Heart left ventricle (tissue), 16 donors: ENCODE measurements at regions of chr17 and their contacts with region 1.

Region 1: DNA sequence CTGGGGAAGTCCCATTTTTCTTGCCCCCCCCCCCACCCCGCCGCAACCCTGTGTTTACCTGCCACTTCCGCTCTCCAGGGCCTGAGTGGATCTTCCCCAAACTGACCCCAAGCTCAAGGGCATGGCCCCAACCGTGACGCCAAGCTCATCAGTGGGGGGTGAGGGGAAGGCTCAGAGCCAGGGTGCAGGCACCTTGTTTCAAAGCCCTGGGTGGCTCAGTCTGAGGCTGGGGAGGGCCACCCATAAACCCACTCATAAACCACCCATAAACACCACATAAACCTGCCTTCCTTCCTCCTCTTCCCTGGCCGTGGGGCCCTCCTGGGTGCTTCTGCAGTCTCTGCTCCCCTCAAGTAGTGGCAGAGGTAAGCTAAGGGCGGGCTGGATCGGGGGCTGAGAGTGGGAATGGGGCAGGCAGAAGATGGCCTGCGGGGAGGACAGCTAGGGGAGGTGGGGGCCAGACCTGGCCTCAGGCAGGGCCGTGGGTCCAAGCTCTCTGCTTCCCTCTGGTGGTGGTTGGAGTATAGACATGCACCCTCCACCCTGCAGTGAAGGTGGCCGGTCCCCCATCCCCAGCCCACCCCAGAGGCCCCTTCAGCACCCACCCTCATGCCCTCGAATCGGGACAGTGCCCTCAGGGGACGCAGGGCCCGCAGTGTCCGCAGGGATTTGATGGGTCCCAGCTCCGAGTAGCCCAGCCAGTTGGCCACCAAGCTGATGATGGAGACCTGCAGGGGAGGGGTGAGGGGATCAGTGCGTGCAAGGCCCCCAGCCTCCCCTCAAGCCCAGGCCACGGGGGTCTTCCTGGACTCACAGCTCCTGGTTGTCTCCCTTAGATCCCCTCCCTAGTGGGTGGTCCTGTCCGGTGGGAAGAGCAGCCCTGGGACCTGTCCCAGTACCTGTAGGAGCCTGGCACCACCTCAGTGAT is 14.6 kb upstream of the CD79B start:
- DNase-seq: peak in 3 of 5 donors; percentile 42 to 54 (median 46)
- ATAC-seq: peak in 3 of 4 donors; percentile 68 to 83 (median 79)
- H3K4me3 ChIP-seq: no peak overlapping the region
- H3K27ac ChIP-seq: no peak overlapping the region
- H3K4me1 ChIP-seq: peaks cover 0 to 15% (median 0%) of the 10 kb centered on the region in 12 donors
- H3K27me3 ChIP-seq: no peaks in the 10 kb centered on the region
- CTCF ChIP-seq: peak; percentile 75 to 85 (median 81)
- POLR2A ChIP-seq: no peak

Region 2: GRCh38 chr17:63911657-63912426 is 34.9 kb before region 1 on chr17:
- intact Hi-C with region 1: loop called in 1 of 10 experiments (anchors 5 kb)
- DNase-seq: peak in 1 of 5 donors; percentile 34
- ATAC-seq: peak; percentile 38 to 67 (median 62)
- H3K4me3 ChIP-seq: no peak overlapping the region
- H3K27ac ChIP-seq: no peak overlapping the region
- H3K4me1 ChIP-seq: no peaks in the 10 kb centered on the region
- H3K27me3 ChIP-seq: peaks cover 0 to 11% (median 0%) of the 10 kb centered on the region in 9 donors
- CTCF ChIP-seq: peak; percentile 77 to 91 (median 81)
- POLR2A ChIP-seq: no peak